Activated CD4-positive, alpha-beta T cell treated with anti-CD3 and anti-CD28 coated beads for 36 hours (primary cell): ENCODE measurements at regions of chr7 and their contacts with region 1.

Region 1: DNA sequence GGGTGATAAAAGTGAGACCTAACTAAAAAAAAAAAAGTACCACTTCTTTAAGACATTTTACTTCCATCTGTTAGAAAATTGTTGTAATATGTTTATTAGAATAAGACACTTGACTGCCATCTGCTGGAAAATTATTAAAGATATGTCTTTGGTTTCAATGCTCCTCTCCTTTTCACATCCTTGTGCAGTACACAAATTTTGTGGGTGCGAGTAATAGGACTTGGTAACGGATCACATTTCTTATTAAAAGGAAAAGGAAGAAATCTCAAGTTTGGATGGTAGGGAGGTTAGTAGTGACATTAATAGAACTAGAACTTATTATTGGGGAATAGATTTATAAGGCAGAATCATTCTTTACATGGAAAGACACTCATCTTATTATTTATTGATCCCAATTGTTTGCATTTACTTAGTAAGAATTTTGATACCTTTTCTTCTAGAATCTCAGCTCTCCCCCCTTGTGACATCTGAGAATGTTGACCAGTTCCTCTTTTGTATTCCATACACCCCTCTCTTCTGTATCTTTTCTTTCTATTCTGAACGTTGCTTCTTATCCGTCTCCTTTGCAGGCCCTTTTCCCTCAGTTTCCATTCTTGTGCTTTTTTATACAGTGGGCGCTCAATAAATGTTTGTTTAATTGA is 43.1 kb upstream of the RPA3 start:
- DNase-seq: no peak
- ATAC-seq: peak; percentile 34
- H3K4me3 Mint-ChIP-seq: peak overlapping the region; percentile 74
- H3K27ac Mint-ChIP-seq: peak overlapping the region; percentile 87
- H3K4me1 Mint-ChIP-seq: peaks cover 41% of the 10 kb centered on the region
- H3K27me3 Mint-ChIP-seq: no peaks in the 10 kb centered on the region

Region 2: GRCh38 chr7:7424151-7424873 is 337.1 kb before region 1 on chr7:
- CTCF ChIA-PET with region 1: no interaction called
- POLR2A ChIA-PET with region 1: no interaction called
- intact Hi-C with region 1: loop called (anchors 1 to 5 kb)
- DNase-seq: peak; percentile 65
- ATAC-seq: peak; percentile 92
- H3K4me3 Mint-ChIP-seq: peak overlapping the region; percentile 55
- H3K27ac Mint-ChIP-seq: no peak overlapping the region
- H3K4me1 Mint-ChIP-seq: peaks cover 6% of the 10 kb centered on the region
- H3K27me3 Mint-ChIP-seq: no peaks in the 10 kb centered on the region

Region 3: DNA sequence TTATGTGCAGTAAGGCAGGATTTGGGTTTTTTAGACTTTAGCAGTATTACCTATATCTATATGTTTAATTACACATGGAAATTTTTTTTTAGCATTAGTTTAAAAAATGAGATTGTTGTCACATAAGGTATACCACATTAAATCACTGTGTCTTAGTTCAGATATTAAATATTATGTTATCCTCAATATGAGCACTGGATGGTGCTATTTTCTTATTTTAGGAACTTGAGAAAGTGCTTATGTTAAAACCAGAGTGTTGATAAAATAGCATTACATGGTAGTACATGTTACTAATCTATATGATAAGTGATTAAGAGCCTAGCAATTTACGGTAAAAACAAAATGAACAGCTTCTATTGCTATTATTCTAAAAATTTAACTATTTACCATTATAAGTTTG is 166.0 kb before region 1 on chr7:
- CTCF ChIA-PET with region 1: interaction called, 3 read pairs
- POLR2A ChIA-PET with region 1: no interaction called
- intact Hi-C with region 1: loop called (anchors 1 to 5 kb)
- DNase-seq: no peak
- ATAC-seq: no peak
- H3K4me3 Mint-ChIP-seq: no peak overlapping the region
- H3K27ac Mint-ChIP-seq: no peak overlapping the region
- H3K4me1 Mint-ChIP-seq: no peaks in the 10 kb centered on the region
- H3K27me3 Mint-ChIP-seq: no peaks in the 10 kb centered on the region

Region 4: GRCh38 chr7:7719236-7719635 is 42.2 kb before region 1 on chr7:
- CTCF ChIA-PET with region 1: interaction called, 4 read pairs
- POLR2A ChIA-PET with region 1: no interaction called
- intact Hi-C with region 1: loop called in 1 of 2 experiments (anchors 2 kb)
- DNase-seq: peak; percentile 66
- ATAC-seq: peak; percentile 99
- H3K4me3 Mint-ChIP-seq: peak overlapping the region; percentile 8
- H3K27ac Mint-ChIP-seq: peak overlapping the region; percentile 84
- H3K4me1 Mint-ChIP-seq: peaks cover 28% of the 10 kb centered on the region
- H3K27me3 Mint-ChIP-seq: no peaks in the 10 kb centered on the region

Region 5: DNA sequence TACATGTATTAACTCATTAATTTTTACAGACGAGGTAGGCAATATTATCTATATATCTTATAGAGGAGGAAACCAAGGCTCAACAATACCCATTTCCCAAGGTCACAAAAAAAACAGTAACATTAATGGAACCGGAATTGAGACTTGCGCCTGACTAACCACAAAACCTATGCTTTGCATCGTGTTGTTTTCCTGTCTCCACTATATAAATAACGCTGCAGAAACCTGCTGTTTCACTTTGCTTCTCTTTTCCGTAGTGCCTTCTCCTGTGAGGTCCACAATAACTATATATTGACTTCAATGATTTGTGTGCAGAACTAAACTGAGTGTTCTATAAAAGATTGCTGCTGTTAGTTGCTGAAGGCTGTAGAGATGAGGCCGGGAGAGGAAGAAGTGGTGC is 54.6 kb after region 1 on chr7:
- CTCF ChIA-PET with region 1: no interaction called
- POLR2A ChIA-PET with region 1: no interaction called
- intact Hi-C with region 1: no loop called
- DNase-seq: no peak
- ATAC-seq: peak; percentile 27
- H3K4me3 Mint-ChIP-seq: no peak overlapping the region
- H3K27ac Mint-ChIP-seq: no peak overlapping the region
- H3K4me1 Mint-ChIP-seq: peaks cover 36% of the 10 kb centered on the region
- H3K27me3 Mint-ChIP-seq: no peaks in the 10 kb centered on the region

Region 6: DNA sequence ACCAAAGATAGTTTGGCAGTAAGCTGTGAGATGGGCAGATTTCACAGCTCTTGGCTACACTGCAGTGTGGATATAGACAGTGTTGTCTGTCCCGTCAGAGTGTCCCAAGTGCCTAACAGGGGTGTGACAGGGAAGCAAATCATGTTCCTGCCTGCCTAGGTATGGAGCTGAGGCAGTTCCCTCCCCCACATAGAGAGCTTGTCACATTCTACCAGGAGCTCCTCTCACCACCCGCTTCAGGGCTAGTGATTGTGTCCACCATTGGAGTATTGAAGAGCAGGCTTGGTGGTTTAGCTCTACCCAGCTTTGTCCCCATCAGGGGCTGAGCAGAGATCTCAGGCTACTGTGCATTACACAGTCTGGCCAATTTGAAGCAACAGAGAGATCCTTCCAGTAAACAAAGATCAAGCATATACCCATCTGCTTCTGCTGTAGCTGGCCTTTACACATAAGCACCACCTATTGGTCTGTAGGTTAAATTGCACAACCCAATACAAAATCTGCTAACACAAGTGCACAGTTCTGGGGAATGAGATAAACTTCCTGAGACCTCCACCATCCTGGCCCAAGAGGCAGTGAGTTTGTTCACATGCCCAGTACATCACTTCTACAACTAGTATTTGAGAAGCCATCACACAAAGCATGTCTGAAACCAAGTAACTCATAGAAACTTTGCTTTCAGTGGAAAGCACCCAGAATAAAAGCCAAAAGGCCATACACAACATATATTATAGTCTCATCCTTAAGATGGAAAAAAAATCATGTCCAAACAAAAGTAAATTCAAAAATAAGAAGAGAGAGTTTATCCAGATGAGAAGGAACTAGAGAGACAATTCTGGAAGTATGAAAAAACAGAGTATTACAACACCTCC is 274.4 kb after region 1 on chr7:
- CTCF ChIA-PET with region 1: interaction called, 5 read pairs
- POLR2A ChIA-PET with region 1: no interaction called
- intact Hi-C with region 1: loop called in 1 of 2 experiments (anchors 5 kb)
- DNase-seq: no peak
- ATAC-seq: peak; percentile 68
- H3K4me3 Mint-ChIP-seq: no peak overlapping the region
- H3K27ac Mint-ChIP-seq: no peak overlapping the region
- H3K4me1 Mint-ChIP-seq: peaks cover 23% of the 10 kb centered on the region
- H3K27me3 Mint-ChIP-seq: no peaks in the 10 kb centered on the region

Region 7: GRCh38 chr7:8190119-8190895 is 428.8 kb after region 1 on chr7:
- CTCF ChIA-PET with region 1: no interaction called
- POLR2A ChIA-PET with region 1: no interaction called
- intact Hi-C with region 1: loop called in 1 of 2 experiments (anchors 5 kb)
- DNase-seq: peak; percentile 73
- ATAC-seq: peak; percentile 86
- H3K4me3 Mint-ChIP-seq: no peak overlapping the region
- H3K27ac Mint-ChIP-seq: no peak overlapping the region
- H3K4me1 Mint-ChIP-seq: peaks cover 8% of the 10 kb centered on the region
- H3K27me3 Mint-ChIP-seq: no peaks in the 10 kb centered on the region

Region 8: DNA sequence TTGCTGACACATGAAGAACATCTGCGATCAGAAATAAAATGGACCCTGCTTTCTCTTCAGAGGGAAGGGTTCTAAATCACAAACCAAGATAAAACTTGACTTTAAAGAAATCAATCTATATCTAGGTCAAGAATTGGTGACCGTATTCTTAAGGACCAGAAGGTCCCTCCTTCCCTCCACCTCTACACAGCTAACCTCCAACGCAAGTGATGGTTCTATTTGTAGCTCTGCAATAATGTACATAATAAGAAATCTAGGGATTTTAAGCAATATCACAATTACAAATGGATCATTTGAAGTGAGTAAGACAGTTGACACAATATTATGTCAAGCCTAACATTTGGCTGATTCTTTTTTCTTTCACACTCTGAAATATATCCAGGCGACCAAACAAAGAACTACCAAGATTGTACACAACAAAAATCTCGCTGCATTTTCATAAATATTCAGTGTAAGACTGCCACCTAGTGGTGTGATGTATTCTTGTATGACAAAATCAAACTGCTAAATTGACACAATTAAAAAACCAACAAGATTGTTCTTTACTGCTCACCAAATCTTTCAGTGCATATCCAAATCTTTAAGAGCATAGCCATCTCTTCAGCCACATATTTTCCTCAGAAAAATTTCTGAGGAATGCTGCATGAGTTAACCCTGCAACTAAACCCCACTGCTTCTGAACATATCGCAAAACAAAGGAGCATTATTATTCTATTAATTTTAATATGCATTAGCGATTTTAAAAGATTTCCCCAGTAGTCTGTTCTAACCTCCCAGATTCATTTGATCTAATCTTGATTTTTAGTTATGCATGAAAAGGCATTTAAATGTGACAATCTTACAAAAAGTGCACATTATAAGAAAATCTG is 456.0 kb after region 1 on chr7:
- CTCF ChIA-PET with region 1: interaction called, 3 read pairs
- POLR2A ChIA-PET with region 1: no interaction called
- intact Hi-C with region 1: loop called (anchors 5 kb)
- DNase-seq: no peak
- ATAC-seq: peak; percentile 49
- H3K4me3 Mint-ChIP-seq: no peak overlapping the region
- H3K27ac Mint-ChIP-seq: no peak overlapping the region
- H3K4me1 Mint-ChIP-seq: peaks cover 2% of the 10 kb centered on the region
- H3K27me3 Mint-ChIP-seq: no peaks in the 10 kb centered on the region